IMR-90 (cell line): ENCODE measurements at regions of chr4 and their contacts with region 1.

Region 1: DNA sequence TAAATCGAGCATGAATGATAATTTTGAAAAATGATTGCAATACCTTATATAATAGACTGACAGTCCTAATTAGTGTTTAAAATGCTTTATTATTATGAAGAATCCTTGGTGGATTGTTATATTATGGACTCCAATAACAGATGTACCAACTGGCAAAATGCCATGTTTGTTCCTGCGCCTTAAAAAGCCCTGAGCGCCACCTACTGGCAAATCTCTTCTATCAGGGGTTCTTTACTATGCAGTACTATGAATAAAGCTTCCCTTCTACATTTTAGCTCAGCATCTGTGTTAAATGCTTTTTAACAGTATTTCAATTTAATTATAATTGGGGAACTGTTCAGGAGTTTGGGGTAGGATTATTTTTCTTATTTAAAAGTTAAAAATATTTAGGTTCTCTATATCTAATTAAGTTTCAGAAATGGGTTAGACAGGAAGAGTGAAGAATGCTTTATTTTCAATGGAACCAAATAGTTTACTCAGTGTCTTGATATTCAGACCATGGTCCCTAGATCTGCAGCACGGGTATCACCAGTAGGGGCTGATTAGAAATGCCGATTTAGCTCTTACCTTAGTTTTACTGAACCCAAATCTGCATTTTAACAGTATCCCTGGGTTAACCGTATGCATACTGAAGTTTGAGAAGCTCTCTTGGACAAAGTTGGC is 20.1 kb downstream of the CFAP97 start:
- DNase-seq: peak; percentile 93
- ATAC-seq: peak; percentile 71
- H3K4me3 ChIP-seq: no peak overlapping the region
- H3K27ac ChIP-seq: no peak overlapping the region
- H3K4me1 ChIP-seq: peaks cover 5% of the 10 kb centered on the region; the same call in 1 of the 2 replicates
- H3K27me3 ChIP-seq: no peaks in the 10 kb centered on the region
- CTCF ChIP-seq: peak; percentile 84
- POLR2A ChIP-seq: no peak
- RAD21 ChIP-seq: peak; percentile 73

Region 2: GRCh38 chr4:185142912-185143595 is 40.7 kb before region 1 on chr4 and contains the start of gene SLC25A4:
- CTCF ChIA-PET with region 1: interaction called, 7 read pairs
- POLR2A ChIA-PET with region 1: no interaction called
- dilution Hi-C with region 1: no loop called
- in situ Hi-C with region 1: no loop called
- intact Hi-C with region 1: loop called (anchors 2 kb)
- DNase-seq: peak; percentile 62
- ATAC-seq: peak; percentile 98
- H3K4me3 ChIP-seq: peak within 1 kb of the TSS; percentile 81
- H3K27ac ChIP-seq: no peak within 1 kb of the TSS; the same call in 1 of the 2 replicates
- H3K4me1 ChIP-seq: no peaks in the 10 kb centered on the region; the same call in 1 of the 2 replicates
- H3K27me3 ChIP-seq: peaks cover 5% of the 10 kb centered on the region
- CTCF ChIP-seq: peak; percentile 53
- POLR2A ChIP-seq: peak; percentile 92
- RAD21 ChIP-seq: no peak; the same call in 1 of the 2 replicates
- total RNA-seq, gene SLC25A4: 16.0 and 21.9 TPM in 2 replicates

Region 3: GRCh38 chr4:185421366-185422124 is 237.8 kb after region 1 on chr4:
- CTCF ChIA-PET with region 1: no interaction called
- POLR2A ChIA-PET with region 1: no interaction called
- dilution Hi-C with region 1: no loop called
- in situ Hi-C with region 1: no loop called
- intact Hi-C with region 1: no loop called
- DNase-seq: peak; percentile 68
- ATAC-seq: peak; percentile 8
- H3K4me3 ChIP-seq: no peak overlapping the region
- H3K27ac ChIP-seq: no peak overlapping the region
- H3K4me1 ChIP-seq: peaks cover 5% of the 10 kb centered on the region; the same call in 1 of the 2 replicates
- H3K27me3 ChIP-seq: no peaks in the 10 kb centered on the region
- CTCF ChIP-seq: no peak
- POLR2A ChIP-seq: no peak
- RAD21 ChIP-seq: no peak